Activated CD4-positive, alpha-beta T cell treated with anti-CD3 and anti-CD28 coated beads, Interleukin-2, amount 10 ng/mL, durations not matched to agents 24 days and 14 days (primary cell): ENCODE measurements at regions of chr6 and their contacts with region 1.

Region 1: GRCh38 chr6:132300323-132300949 is 100.8 kb downstream of the MOXD1 start:
- DNase-seq: peak; percentile 66
- H3K4me3 Mint-ChIP-seq: no peak overlapping the region
- H3K27ac Mint-ChIP-seq: no peak overlapping the region
- H3K4me1 Mint-ChIP-seq: no peaks in the 10 kb centered on the region
- H3K27me3 Mint-ChIP-seq: peaks cover 24% of the 10 kb centered on the region

Region 2: GRCh38 chr6:132279592-132280139 is 20.8 kb before region 1 on chr6:
- intact Hi-C with region 1: loop called (anchors 1 kb)
- DNase-seq: peak; percentile 90
- H3K4me3 Mint-ChIP-seq: peak overlapping the region; percentile 83
- H3K27ac Mint-ChIP-seq: peak overlapping the region; percentile 74
- H3K4me1 Mint-ChIP-seq: peaks cover 2% of the 10 kb centered on the region
- H3K27me3 Mint-ChIP-seq: peaks cover 15% of the 10 kb centered on the region

Region 3: DNA sequence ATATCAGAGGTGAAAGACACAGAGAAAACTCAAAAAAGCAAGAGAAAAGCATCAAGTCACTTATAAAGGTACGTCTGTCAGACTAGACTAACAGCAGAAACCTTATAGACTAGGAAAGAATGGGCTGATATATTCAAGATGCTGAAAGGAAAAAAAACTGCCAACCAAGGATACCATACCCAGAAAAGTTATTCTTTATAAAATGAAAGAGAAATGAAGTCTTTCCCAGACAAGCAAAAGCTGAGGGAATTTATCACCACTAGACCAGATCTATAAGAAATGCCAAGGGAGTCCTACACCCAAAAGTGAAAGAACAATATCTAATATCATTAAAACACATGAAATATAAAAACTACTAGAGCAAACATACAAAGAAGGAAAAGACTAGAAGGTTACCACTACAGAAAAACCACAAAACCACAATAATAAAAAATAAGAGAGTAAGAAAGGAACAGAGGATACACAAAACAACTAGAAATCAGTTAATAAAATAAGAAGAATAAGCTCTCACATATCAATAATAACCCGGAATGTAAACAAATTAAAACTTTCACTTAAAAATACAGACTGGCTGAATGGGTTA is 94.7 kb after region 1 on chr6:
- intact Hi-C with region 1: loop called (anchors 2 kb)
- DNase-seq: no peak
- H3K4me3 Mint-ChIP-seq: no peak overlapping the region
- H3K27ac Mint-ChIP-seq: no peak overlapping the region
- H3K4me1 Mint-ChIP-seq: no peaks in the 10 kb centered on the region
- H3K27me3 Mint-ChIP-seq: peaks cover 46% of the 10 kb centered on the region